ENCODE measurements at regions of chrX and their contacts with region 1.

Region 1: GRCh38 chrX:103918581-103919269 is 43.7 kb upstream of the TMSB15B start:
- DNase-seq: peak; percentile 18 to 79 (median 41)
- ATAC-seq: peak; percentile 74
- H3K4me3 ChIP-seq: peak overlapping the region; percentile 75
- H3K4me3 Mint-ChIP-seq: peak overlapping the region; percentile 90
- H3K27ac ChIP-seq: peak overlapping the region; percentile 53 to 75
- H3K27ac Mint-ChIP-seq: peak overlapping the region; percentile 95
- H3K4me1 ChIP-seq: peaks cover 25% of the 10 kb centered on the region
- H3K4me1 Mint-ChIP-seq: peaks cover 18% of the 10 kb centered on the region
- H3K27me3 ChIP-seq: no peaks in the 10 kb centered on the region
- H3K27me3 Mint-ChIP-seq: no peaks in the 10 kb centered on the region
- CTCF ChIP-seq: no peak

Region 2: DNA sequence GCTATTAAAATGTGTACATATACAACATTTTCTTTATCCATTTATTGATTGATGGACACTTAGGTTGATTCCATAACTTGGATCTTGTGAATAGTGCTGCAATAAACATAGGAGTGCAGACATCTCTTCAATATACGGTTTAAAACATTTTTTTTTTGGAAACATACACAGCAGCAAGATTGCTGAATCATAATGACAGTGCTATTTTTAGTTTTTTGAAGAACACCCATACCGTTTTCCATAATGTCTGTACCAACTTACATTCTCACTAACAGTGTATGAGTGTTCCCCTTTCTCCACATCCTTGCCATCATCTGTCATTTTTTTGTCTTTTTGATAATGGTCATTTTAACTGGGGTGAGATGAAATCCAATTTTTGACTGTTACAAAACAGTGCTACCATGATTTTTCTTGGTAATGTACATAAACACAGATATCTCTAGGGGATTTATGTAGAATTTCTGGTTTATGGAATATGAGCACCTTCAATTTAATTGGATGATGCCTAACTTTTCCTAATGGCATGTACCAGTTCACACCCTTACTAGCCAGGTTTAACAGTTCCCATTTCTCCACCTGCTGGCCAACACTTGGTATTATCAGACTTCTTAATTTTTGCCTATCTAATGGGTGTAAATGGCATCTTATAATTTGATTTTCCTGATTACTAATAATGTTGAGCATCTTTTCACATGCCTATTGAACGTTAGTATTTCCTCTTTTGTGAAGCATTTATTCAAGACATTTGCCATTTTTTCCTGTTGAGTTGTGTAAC is 22.7 kb after region 1 on chrX:
- CTCF ChIA-PET with region 1: interaction called, 11 read pairs
- POLR2A ChIA-PET with region 1: interaction called, 7 read pairs
- intact Hi-C with region 1: loop called in 1 of 2 experiments (anchors 2 kb)
- DNase-seq: peak in 4 of 14 experiments; percentile 36 to 55 (median 47)
- ATAC-seq: no peak
- H3K4me3 ChIP-seq: no peak overlapping the region
- H3K4me3 Mint-ChIP-seq: no peak overlapping the region
- H3K27ac ChIP-seq: no peak overlapping the region
- H3K27ac Mint-ChIP-seq: no peak overlapping the region
- H3K4me1 ChIP-seq: peaks cover 5% of the 10 kb centered on the region
- H3K4me1 Mint-ChIP-seq: peaks cover 13% of the 10 kb centered on the region
- H3K27me3 ChIP-seq: no peaks in the 10 kb centered on the region
- H3K27me3 Mint-ChIP-seq: no peaks in the 10 kb centered on the region
- CTCF ChIP-seq: peak; percentile 54

Region 3: GRCh38 chrX:104165894-104166737 is 247.4 kb after region 1 on chrX and contains the start of gene FAM199X:
- CTCF ChIA-PET with region 1: no interaction called
- POLR2A ChIA-PET with region 1: interaction called, 4 read pairs
- intact Hi-C with region 1: loop called in 1 of 2 experiments (anchors 5 kb)
- DNase-seq: peak; percentile 65 to 91 (median 76)
- ATAC-seq: peak; percentile 98
- H3K4me3 ChIP-seq: peak within 1 kb of the TSS; percentile 90
- H3K4me3 Mint-ChIP-seq: peak within 1 kb of the TSS; percentile 96
- H3K27ac ChIP-seq: peak within 1 kb of the TSS; percentile 64 to 69
- H3K27ac Mint-ChIP-seq: peak within 1 kb of the TSS; percentile 92
- H3K4me1 ChIP-seq: peaks cover 13% of the 10 kb centered on the region
- H3K4me1 Mint-ChIP-seq: peaks cover 39% of the 10 kb centered on the region
- H3K27me3 ChIP-seq: no peaks in the 10 kb centered on the region
- H3K27me3 Mint-ChIP-seq: no peaks in the 10 kb centered on the region
- CTCF ChIP-seq: peak; percentile 44
- total RNA-seq, gene FAM199X: 16.4 to 17.1 TPM

Measured in CD4-positive, alpha-beta T cell (primary cell).